Aorta (tissue), 5 donors: ENCODE measurements at regions of chr11 and their contacts with region 1.

Region 1: GRCh38 chr11:75896843-75897419 is 81.9 kb downstream of the UVRAG start:
- DNase-seq: no peak
- ATAC-seq: no peak
- H3K4me3 ChIP-seq: no peak overlapping the region
- H3K27ac ChIP-seq: no peak overlapping the region
- H3K4me1 ChIP-seq: no peaks in the 10 kb centered on the region
- H3K27me3 ChIP-seq: no peaks in the 10 kb centered on the region

Region 2: DNA sequence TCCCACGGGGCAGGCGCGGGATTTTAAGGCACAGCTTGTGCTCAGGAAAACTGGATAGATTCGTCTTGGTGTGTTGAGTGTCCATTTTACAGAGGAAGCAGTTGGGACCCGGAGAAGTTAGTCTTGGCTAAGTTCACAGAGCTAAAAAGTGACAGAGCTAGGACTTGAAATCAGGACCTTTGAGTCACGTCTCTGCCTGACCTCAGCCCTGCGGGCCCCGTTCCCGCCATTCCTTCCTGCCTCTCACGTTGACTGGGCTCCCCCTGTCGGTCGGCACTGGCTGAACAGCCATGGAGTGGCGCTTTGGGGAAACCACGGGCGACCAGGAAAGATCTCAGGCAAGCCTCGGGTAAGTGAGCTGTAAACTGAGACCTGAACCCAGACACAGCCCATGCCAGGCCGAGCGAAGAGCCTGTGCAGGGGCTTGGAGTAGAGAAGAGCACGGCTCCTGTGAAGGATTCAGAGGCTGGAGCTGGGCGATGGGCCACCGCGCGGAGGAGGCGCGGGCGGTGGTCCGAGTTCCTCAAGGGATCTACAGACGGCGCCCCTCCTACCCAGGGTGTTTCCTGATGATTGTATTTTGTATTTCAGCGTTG is 255.3 kb after region 1 on chr11:
- intact Hi-C with region 1: loop called (anchors 1 to 2 kb)
- DNase-seq: peak; percentile 93 to 97
- ATAC-seq: peak; percentile 92
- H3K4me3 ChIP-seq: no peak overlapping the region
- H3K27ac ChIP-seq: no peak overlapping the region
- H3K4me1 ChIP-seq: no peaks in the 10 kb centered on the region
- H3K27me3 ChIP-seq: no peaks in the 10 kb centered on the region

Region 3: GRCh38 chr11:76318744-76319384 is 421.9 kb after region 1 on chr11:
- intact Hi-C with region 1: loop called (anchors 2 to 5 kb)
- DNase-seq: peak; percentile 85 to 94
- ATAC-seq: peak; percentile 86
- H3K4me3 ChIP-seq: no peak overlapping the region
- H3K27ac ChIP-seq: no peak overlapping the region
- H3K4me1 ChIP-seq: no peaks in the 10 kb centered on the region
- H3K27me3 ChIP-seq: no peaks in the 10 kb centered on the region